ENCODE measurements at regions of chr7 and their contacts with region 1.

Region 1: GRCh38 chr7:26686448-26686981 is 177.9 kb downstream of the SKAP2 start:
- DNase-seq: no peak
- ATAC-seq: no peak
- H3K4me3 Mint-ChIP-seq: no peak overlapping the region
- H3K27ac Mint-ChIP-seq: no peak overlapping the region
- H3K4me1 Mint-ChIP-seq: peaks cover 28% of the 10 kb centered on the region
- H3K27me3 Mint-ChIP-seq: no peaks in the 10 kb centered on the region
- CTCF ChIP-seq: peak; percentile 61

Region 2: DNA sequence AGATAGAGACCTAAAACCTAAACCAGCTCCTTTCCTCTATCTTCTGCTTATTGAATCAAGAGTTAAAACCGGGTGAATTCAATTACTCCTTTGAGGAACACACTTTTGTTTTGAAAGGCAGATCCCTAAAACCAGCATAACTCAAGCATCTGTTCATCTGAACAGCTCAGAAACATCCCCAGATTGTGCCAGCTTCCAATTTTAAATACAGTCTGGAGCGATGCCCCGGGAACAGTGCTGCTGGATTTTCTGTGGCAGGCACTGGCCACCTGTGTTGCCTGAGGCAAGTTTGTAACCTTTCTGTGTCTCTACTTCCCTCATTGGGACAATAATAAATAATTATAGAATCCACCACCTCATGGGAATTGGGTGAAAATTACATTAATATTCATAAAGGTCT is 815.9 kb before region 1 on chr7:
- CTCF ChIA-PET with region 1: no interaction called
- POLR2A ChIA-PET with region 1: no interaction called
- intact Hi-C with region 1: loop called (anchors 5 kb)
- DNase-seq: no peak
- ATAC-seq: no peak
- H3K4me3 Mint-ChIP-seq: no peak overlapping the region
- H3K27ac Mint-ChIP-seq: no peak overlapping the region
- H3K4me1 Mint-ChIP-seq: no peaks in the 10 kb centered on the region
- H3K27me3 Mint-ChIP-seq: peaks cover 59% of the 10 kb centered on the region
- CTCF ChIP-seq: no peak

Region 3: DNA sequence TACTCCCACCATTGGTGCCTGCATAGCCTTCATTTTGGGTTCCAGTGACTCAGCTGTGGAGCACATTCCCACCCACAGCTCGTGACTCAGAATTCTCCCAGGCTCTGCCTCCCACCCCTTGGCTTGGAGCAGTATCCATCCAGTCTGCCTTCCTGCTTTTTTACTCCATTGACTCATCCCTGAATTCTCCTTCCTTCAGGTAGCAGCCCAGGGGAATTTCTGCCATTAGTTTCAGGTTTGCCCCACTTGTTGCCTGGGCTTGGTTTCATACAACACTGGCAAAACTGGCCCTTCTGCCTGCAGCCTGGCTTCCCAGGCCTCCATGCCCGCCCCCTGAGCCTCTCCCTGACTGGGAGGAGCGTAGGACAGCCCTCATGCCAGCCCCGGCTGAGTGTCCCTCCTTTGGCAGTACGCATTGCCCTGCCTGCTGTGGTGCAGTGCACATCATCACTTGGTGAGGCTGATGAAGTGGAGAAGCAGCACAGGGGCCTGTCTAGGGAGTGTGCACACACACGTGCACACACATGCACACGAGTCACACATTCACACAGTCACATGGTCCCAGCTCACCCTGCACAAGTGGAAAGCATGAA is 339.8 kb before region 1 on chr7:
- CTCF ChIA-PET with region 1: no interaction called
- POLR2A ChIA-PET with region 1: no interaction called
- intact Hi-C with region 1: no loop called
- DNase-seq: no peak
- ATAC-seq: no peak
- H3K4me3 Mint-ChIP-seq: no peak overlapping the region
- H3K27ac Mint-ChIP-seq: no peak overlapping the region
- H3K4me1 Mint-ChIP-seq: peaks cover 44% of the 10 kb centered on the region
- H3K27me3 Mint-ChIP-seq: no peaks in the 10 kb centered on the region
- CTCF ChIP-seq: no peak

Region 4: GRCh38 chr7:26627891-26628341 is 58.6 kb before region 1 on chr7:
- CTCF ChIA-PET with region 1: no interaction called
- POLR2A ChIA-PET with region 1: no interaction called
- intact Hi-C with region 1: no loop called
- DNase-seq: no peak
- ATAC-seq: no peak
- H3K4me3 Mint-ChIP-seq: no peak overlapping the region
- H3K27ac Mint-ChIP-seq: no peak overlapping the region
- H3K4me1 Mint-ChIP-seq: no peaks in the 10 kb centered on the region
- H3K27me3 Mint-ChIP-seq: no peaks in the 10 kb centered on the region
- CTCF ChIP-seq: no peak

Region 5: GRCh38 chr7:26667500-26668133 is 18.9 kb before region 1 on chr7:
- CTCF ChIA-PET with region 1: interaction called, 11 read pairs
- POLR2A ChIA-PET with region 1: no interaction called
- intact Hi-C with region 1: no loop called
- DNase-seq: no peak
- ATAC-seq: peak; percentile 60
- H3K4me3 Mint-ChIP-seq: no peak overlapping the region
- H3K27ac Mint-ChIP-seq: no peak overlapping the region
- H3K4me1 Mint-ChIP-seq: peaks cover 18% of the 10 kb centered on the region
- H3K27me3 Mint-ChIP-seq: no peaks in the 10 kb centered on the region
- CTCF ChIP-seq: no peak